Panc1 (cell line): ENCODE measurements at regions of chr16 and their contacts with region 1.

Region 1: GRCh38 chr16:31727553-31727952 is 146.1 kb upstream of the ZNF267 start:
- DNase-seq: no peak
- ATAC-seq: no peak
- H3K4me3 ChIP-seq: no peak overlapping the region
- H3K27ac ChIP-seq: no peak overlapping the region
- H3K4me1 ChIP-seq: no peaks in the 10 kb centered on the region
- H3K27me3 ChIP-seq: no peaks in the 10 kb centered on the region
- CTCF ChIP-seq: no peak

Region 2: GRCh38 chr16:31785126-31785525 is 57.6 kb after region 1 on chr16:
- CTCF ChIA-PET with region 1: no interaction called
- POLR2A ChIA-PET with region 1: no interaction called
- in situ Hi-C with region 1: no loop called
- intact Hi-C with region 1: loop called (anchors 10 kb)
- DNase-seq: no peak
- ATAC-seq: no peak
- H3K4me3 ChIP-seq: no peak overlapping the region
- H3K27ac ChIP-seq: no peak overlapping the region
- H3K4me1 ChIP-seq: no peaks in the 10 kb centered on the region
- H3K27me3 ChIP-seq: no peaks in the 10 kb centered on the region
- CTCF ChIP-seq: no peak